ENCODE measurements at regions of chr12 and their contacts with region 1.

Region 1: GRCh38 chr12:57632694-57633477 is at the start of gene B4GALNT1:
- DNase-seq: peak; percentile 85
- CTCF ChIP-seq: peak; percentile 86

Region 2: GRCh38 chr12:57611108-57611809 is 21.6 kb before region 1 on chr12 and contains the start of gene ARHGEF25:
- CTCF ChIA-PET with region 1: interaction called, 25 read pairs
- POLR2A ChIA-PET with region 1: interaction called, 3 read pairs
- DNase-seq: peak; percentile 84
- CTCF ChIP-seq: no peak

Region 3: DNA sequence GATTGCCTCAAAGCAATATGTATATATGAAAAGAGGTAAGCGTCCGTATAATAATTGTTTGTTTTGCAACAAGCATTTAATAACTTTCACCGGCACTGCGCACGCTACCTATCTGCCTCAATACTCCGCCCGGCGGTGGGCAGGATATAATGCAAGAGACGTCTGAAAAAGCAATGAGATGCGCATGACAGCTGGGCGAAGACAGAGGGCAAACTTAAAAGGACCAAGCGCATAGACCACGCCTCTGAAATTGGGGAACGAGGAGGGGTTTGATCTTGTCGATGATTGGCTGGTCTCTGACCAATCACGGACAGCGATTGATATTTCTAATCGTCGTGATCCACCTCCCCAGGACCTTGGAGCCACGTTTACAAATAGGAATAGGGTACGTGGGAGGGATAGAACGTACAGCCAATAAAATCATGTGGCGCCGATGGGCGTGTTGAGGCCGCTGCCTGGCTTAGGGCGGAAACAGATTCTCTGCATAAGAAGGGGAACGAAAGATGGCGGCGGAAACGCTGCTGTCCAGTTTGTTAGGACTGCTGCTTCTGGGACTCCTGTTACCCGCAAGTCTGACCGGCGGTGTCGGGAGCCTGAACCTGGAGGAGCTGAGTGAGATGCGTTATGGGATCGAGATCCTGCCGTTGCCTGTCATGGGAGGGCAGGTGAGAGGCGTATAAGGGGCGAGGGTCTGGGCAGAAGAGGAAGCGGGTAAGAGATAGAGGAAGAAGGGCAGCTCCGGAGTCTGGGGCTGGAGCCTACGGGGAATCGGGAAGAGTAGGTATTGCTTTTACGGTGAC is 61.0 kb after region 1 on chr12 and contains the start of gene OS9:
- CTCF ChIA-PET with region 1: interaction called, 12 read pairs
- POLR2A ChIA-PET with region 1: interaction called, 3 read pairs
- DNase-seq: peak; percentile 95
- CTCF ChIP-seq: peak; percentile 75

Measured in GM10248 (cell line).